ENCODE measurements at regions of chr12 and their contacts with region 1.

Region 1: GRCh38 chr12:104877123-104877705 is 80.9 kb downstream of the SLC41A2 start:
- DNase-seq: peak in 1 of 2 donors; percentile 65
- ATAC-seq: peak in 2 of 3 donors; percentile 47 to 53
- H3K4me3 ChIP-seq: no peak overlapping the region
- H3K4me3 Mint-ChIP-seq: no peak overlapping the region
- H3K27ac ChIP-seq: no peak overlapping the region
- H3K27ac Mint-ChIP-seq: no peak overlapping the region
- H3K4me1 ChIP-seq: no peaks in the 10 kb centered on the region
- H3K4me1 Mint-ChIP-seq: no peaks in the 10 kb centered on the region
- H3K27me3 ChIP-seq: no peaks in the 10 kb centered on the region
- H3K27me3 Mint-ChIP-seq: peaks cover 10 to 15% of the 10 kb centered on the region in 2 donors
- CTCF ChIP-seq: peak; percentile 78

Region 2: DNA sequence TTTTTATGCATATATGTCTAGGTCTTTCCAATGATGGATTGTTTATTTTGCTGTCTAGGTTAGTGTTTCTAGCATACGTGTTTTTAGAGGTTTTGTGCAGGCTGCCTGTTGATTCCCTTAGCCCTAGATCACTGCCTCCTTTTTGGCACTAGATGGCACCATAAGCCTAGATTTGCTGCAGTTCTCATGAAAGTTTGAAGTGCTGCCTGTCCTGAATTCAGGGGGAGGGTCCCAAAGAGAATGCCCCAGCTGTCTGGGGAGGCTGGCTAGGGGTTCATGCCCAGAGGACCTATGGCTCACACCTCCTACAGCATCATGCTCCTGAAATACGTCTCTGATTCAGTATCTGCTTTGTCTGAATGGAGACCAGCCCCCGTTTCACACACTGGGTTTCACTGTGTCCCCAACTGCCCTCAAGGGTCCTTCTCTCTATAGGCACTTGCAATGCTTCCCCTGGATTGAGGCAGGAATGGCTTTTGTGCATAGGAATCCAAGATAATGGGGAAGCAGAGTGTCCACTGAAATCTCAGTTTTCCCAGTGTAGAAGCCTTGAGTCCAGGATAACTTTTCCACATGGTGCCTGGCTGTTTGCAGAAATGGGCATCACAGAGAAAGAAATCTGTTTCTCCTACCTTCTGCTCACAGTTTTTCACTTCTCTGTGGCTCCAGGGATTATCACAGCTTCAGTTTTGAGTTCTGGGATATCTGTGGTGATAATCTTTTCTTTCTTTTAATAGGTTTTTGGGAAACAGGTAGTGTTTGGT is 675.8 kb before region 1 on chr12:
- intact Hi-C with region 1: loop called (anchors 1 kb)
- DNase-seq: peak; percentile 31 to 84
- ATAC-seq: peak; percentile 61 to 86 (median 76)
- H3K4me3 ChIP-seq: no peak overlapping the region
- H3K4me3 Mint-ChIP-seq: no peak overlapping the region
- H3K27ac ChIP-seq: no peak overlapping the region
- H3K27ac Mint-ChIP-seq: no peak overlapping the region
- H3K4me1 ChIP-seq: no peaks in the 10 kb centered on the region
- H3K4me1 Mint-ChIP-seq: no peaks in the 10 kb centered on the region
- H3K27me3 ChIP-seq: no peaks in the 10 kb centered on the region
- H3K27me3 Mint-ChIP-seq: peaks cover 16 to 34% of the 10 kb centered on the region in 2 donors
- CTCF ChIP-seq: peak; percentile 92

Region 3: GRCh38 chr12:104381731-104382480 is 495.3 kb before region 1 on chr12:
- intact Hi-C with region 1: loop called (anchors 1 kb)
- DNase-seq: peak; percentile 73 to 92
- ATAC-seq: peak; percentile 88 to 94 (median 91)
- H3K4me3 ChIP-seq: no peak overlapping the region
- H3K4me3 Mint-ChIP-seq: no peak overlapping the region
- H3K27ac ChIP-seq: no peak overlapping the region
- H3K27ac Mint-ChIP-seq: peak overlapping the region in 1 of 2 donors; percentile 75
- H3K4me1 ChIP-seq: peaks cover 9% of the 10 kb centered on the region
- H3K4me1 Mint-ChIP-seq: peaks cover 11 to 18% of the 10 kb centered on the region in 2 donors
- H3K27me3 ChIP-seq: peaks cover 3% of the 10 kb centered on the region
- H3K27me3 Mint-ChIP-seq: peaks cover 6 to 7% of the 10 kb centered on the region in 2 donors
- CTCF ChIP-seq: peak; percentile 97

Region 4: DNA sequence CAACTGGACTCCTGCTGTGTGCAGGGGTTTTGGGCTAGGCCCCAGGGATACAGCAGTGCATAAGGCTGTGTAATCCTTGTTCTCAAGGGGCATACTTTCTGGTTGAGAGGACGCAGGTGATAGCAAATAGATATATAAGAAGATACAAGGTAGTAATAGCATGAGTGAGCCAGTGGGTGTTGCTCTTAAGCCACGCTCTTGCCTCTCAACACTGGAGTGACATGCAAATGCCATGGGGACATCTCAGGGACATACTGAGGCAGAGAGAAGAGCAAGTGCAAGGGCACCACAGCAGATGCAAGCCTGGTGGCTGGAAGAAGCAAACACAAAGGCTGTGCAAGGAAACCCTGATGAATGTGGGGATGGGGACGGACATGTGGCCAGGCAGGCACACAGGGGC is 197.1 kb before region 1 on chr12:
- intact Hi-C with region 1: loop called (anchors 2 kb)
- DNase-seq: peak in 1 of 2 donors; percentile 69
- ATAC-seq: peak; percentile 36 to 49 (median 46)
- H3K4me3 ChIP-seq: no peak overlapping the region
- H3K4me3 Mint-ChIP-seq: no peak overlapping the region
- H3K27ac ChIP-seq: no peak overlapping the region
- H3K27ac Mint-ChIP-seq: peak overlapping the region; percentile 65 to 93
- H3K4me1 ChIP-seq: peaks cover 49% of the 10 kb centered on the region
- H3K4me1 Mint-ChIP-seq: peaks cover 81 to 82% of the 10 kb centered on the region in 2 donors
- H3K27me3 ChIP-seq: no peaks in the 10 kb centered on the region
- H3K27me3 Mint-ChIP-seq: no peaks in the 10 kb centered on the region
- CTCF ChIP-seq: peak; percentile 29

Region 5: GRCh38 chr12:104938371-104938770 is 61.2 kb after region 1 on chr12:
- intact Hi-C with region 1: no loop called
- DNase-seq: no peak
- ATAC-seq: no peak
- H3K4me3 ChIP-seq: no peak overlapping the region
- H3K4me3 Mint-ChIP-seq: no peak overlapping the region
- H3K27ac ChIP-seq: no peak overlapping the region
- H3K27ac Mint-ChIP-seq: no peak overlapping the region
- H3K4me1 ChIP-seq: no peaks in the 10 kb centered on the region
- H3K4me1 Mint-ChIP-seq: no peaks in the 10 kb centered on the region
- H3K27me3 ChIP-seq: no peaks in the 10 kb centered on the region
- H3K27me3 Mint-ChIP-seq: peaks cover 14 to 27% of the 10 kb centered on the region in 2 donors
- CTCF ChIP-seq: no peak

Region 6: GRCh38 chr12:105109465-105110212 is 232.4 kb after region 1 on chr12:
- intact Hi-C with region 1: no loop called
- DNase-seq: no peak
- ATAC-seq: no peak
- H3K4me3 ChIP-seq: no peak overlapping the region
- H3K4me3 Mint-ChIP-seq: peak overlapping the region; percentile 97
- H3K27ac ChIP-seq: peak overlapping the region; percentile 50
- H3K27ac Mint-ChIP-seq: peak overlapping the region; percentile 91 to 97
- H3K4me1 ChIP-seq: peaks cover 8% of the 10 kb centered on the region
- H3K4me1 Mint-ChIP-seq: peaks cover 47% of the 10 kb centered on the region in 2 donors
- H3K27me3 ChIP-seq: peaks cover 12% of the 10 kb centered on the region
- H3K27me3 Mint-ChIP-seq: peaks cover 11 to 13% of the 10 kb centered on the region in 2 donors
- CTCF ChIP-seq: no peak

Measured in natural killer cell (primary cell).